ENCODE measurements at regions of chr16 and their contacts with region 1.

Region 1: DNA sequence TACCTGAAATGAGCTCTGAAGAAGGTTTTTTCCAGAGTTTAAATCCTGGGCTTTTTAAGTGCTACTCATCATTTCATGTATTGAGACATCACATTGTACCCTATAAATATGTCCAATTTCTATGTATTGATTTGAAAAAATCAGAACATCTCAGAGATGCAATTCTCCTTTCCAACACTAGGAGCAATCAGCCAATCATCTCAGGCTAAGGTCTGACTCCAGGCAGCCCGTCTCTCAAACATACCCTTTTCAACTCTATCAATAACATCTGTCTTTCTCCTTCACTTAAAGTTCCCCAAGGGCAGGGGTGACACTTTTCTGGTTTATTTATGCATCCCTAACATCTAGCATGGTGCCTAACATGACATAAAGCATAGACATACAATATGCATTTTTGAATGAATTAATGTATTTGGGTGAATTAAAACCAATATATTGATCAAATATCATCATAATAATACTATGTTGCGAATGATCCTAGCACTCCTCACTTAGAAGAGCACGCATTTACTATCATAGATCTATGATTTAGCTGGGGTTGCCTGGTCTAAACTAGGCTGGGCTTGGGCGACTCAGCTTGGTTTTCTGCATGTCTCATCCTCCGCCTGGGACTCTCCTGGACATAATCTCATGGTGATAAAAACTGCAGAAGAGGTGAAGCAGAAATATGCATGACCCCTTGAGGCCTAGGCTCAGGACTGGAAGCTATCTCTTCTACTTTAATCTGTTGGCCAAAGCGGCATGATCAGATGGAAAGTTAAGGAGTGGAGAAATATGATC is 5.2 kb upstream of the CDH11 start:
- DNase-seq: no peak
- H3K4me3 Mint-ChIP-seq: no peak overlapping the region
- H3K27ac Mint-ChIP-seq: no peak overlapping the region
- H3K4me1 Mint-ChIP-seq: no peaks in the 10 kb centered on the region
- H3K27me3 Mint-ChIP-seq: peaks cover 15% of the 10 kb centered on the region

Region 2: DNA sequence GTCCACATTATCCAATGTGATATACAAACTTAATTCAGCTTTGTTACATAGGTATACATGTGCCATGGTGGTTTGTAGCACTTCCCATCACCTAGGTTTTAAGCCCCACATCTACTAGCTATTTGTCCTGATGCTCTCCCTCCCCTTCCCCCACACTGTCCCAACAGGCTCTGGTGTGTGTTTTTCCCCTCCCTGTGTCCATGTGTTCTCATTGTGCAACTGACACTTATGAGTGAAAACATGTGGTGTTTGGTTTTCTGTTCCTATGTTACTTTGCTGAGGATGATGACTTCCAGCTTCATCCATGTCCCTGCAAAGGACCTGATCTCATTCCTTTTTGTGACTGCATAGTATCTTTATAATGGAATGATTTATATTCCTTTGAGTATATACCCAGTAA is 201.9 kb before region 1 on chr16:
- intact Hi-C with region 1: no loop called
- DNase-seq: no peak
- H3K4me3 Mint-ChIP-seq: no peak overlapping the region
- H3K27ac Mint-ChIP-seq: no peak overlapping the region
- H3K4me1 Mint-ChIP-seq: no peaks in the 10 kb centered on the region
- H3K27me3 Mint-ChIP-seq: no peaks in the 10 kb centered on the region

Region 3: DNA sequence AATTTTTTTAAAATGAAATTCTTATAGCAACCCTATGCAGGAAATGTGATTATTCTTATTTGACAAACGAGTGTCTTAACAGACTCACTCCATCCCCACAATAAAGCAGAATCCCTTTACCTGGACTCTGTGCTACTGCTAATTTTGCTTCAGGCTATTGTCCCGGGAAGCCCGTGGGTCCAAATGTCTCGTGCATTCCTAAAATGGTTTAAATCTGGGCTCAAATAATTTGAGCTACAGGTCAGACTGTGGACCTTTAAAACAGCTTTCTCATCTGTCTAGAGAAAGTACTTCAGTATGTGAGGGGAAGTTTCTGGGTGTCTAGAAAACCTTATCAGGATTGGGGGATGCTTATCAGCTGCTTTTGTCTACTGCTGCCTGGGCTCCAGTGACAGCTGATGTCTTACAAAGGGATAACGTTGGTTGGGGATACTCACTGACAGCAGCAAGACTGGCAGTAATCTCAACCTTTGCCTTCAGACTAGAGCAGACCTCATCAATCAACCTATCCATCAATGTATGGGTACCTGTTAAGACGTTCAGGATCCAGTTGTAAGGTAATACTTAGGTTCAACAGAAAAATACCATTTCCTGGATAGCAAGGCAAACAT is 192.7 kb after region 1 on chr16:
- intact Hi-C with region 1: loop called (anchors 2 kb)
- DNase-seq: no peak
- H3K4me3 Mint-ChIP-seq: no peak overlapping the region
- H3K27ac Mint-ChIP-seq: no peak overlapping the region
- H3K4me1 Mint-ChIP-seq: no peaks in the 10 kb centered on the region
- H3K27me3 Mint-ChIP-seq: no peaks in the 10 kb centered on the region

Region 4: DNA sequence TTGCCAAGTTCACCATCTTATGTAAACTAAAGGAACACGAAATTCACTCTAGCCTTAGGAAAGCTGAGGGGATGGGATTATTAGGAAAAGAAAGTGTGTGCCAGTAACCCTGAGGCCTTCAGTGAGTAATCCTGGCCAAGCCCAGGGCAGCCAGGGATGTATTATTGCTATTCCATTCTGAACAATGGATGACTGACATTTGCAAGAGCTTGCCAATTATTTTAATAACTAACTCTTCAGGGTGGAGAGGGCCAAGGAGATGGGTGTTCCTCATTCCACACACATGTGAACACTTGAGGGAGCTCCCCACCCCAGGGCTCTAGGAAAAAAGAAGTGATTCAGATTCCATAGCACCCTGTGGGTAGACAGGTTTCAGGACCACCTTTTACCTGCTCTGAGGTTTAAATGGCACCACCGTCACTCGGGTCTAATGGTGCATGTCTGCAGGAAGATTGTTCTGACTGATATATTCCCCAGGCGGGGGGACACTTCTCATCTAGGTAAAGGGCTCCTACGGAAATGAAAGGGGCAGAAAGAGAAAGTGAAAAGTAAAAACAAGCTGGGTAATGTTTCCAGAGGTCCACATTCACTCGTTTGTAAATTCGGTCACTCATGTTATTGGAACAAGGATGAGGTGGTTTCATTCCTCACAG is 1381.4 kb after region 1 on chr16:
- intact Hi-C with region 1: no loop called
- DNase-seq: no peak
- H3K4me3 Mint-ChIP-seq: no peak overlapping the region
- H3K27ac Mint-ChIP-seq: no peak overlapping the region
- H3K4me1 Mint-ChIP-seq: peaks cover 18% of the 10 kb centered on the region
- H3K27me3 Mint-ChIP-seq: no peaks in the 10 kb centered on the region